Ovary (tissue), 10 donors: ENCODE measurements at regions of chr1 and their contacts with region 1.

Region 1: DNA sequence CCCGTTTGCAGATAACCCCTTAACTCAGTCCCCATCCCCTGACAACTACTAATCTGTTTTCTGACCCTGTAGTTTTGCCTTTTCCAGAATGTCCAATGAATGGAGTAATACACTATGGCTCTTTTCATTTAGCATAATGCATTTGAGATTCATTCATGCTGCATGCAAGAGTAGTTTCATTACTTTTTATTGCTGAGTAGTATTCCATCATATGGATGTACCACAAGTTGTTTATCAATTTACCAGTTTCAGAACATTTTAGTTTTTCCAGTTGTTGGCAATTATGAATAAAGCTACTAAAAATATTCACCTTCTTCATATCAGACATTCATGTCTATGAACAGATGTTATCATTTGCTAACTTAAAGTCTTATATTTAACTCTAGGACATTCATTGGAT is 45.3 kb downstream of the STXBP3 start:
- DNase-seq: no peak
- H3K4me3 ChIP-seq: no peak overlapping the region
- H3K27ac ChIP-seq: no peak overlapping the region
- H3K4me1 ChIP-seq: no peaks in the 10 kb centered on the region
- H3K27me3 ChIP-seq: no peaks in the 10 kb centered on the region
- CTCF ChIP-seq: no peak
- EP300 ChIP-seq: no peak
- POLR2A ChIP-seq: no peak

Region 2: DNA sequence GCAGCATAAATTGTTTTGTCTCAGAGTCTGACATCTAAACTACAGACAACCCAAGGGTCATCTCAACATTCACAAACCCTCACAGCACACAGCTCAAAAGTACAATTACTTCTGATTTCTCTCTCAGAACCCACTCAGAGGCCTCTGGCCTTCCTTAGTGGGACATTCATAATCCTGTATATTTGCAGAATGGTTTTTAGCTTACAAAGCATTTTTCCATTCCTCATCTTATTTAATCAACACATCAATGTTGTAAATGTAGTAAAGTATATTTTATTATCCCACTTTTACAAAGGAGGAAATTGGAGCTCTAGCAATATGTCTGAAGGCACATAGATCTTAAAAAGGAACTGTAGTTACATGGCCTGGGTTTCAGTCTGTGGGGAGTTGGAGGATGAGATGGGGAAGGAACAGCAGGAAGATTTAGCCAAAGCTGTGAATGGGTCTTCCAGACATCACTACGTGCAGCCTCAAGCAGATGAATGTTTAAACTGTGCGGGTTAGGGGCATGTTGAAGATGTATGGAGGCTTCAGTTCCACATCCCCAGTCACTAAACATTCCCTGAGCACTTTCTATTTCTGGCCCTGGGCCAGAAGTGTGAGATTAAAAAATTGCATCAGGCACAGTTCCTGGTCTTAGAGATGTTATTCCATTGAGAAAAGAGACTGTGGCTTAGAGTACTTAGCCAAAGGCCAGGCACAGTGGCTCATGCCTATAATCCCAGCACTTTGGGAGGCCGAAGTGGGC is 51.8 kb after region 1 on chr1:
- intact Hi-C with region 1: loop called in 1 of 4 experiments (anchors 2 kb)
- DNase-seq: no peak
- H3K4me3 ChIP-seq: no peak overlapping the region
- H3K27ac ChIP-seq: no peak overlapping the region
- H3K4me1 ChIP-seq: no peaks in the 10 kb centered on the region
- H3K27me3 ChIP-seq: no peaks in the 10 kb centered on the region
- CTCF ChIP-seq: no peak
- EP300 ChIP-seq: no peak
- POLR2A ChIP-seq: no peak

Region 3: DNA sequence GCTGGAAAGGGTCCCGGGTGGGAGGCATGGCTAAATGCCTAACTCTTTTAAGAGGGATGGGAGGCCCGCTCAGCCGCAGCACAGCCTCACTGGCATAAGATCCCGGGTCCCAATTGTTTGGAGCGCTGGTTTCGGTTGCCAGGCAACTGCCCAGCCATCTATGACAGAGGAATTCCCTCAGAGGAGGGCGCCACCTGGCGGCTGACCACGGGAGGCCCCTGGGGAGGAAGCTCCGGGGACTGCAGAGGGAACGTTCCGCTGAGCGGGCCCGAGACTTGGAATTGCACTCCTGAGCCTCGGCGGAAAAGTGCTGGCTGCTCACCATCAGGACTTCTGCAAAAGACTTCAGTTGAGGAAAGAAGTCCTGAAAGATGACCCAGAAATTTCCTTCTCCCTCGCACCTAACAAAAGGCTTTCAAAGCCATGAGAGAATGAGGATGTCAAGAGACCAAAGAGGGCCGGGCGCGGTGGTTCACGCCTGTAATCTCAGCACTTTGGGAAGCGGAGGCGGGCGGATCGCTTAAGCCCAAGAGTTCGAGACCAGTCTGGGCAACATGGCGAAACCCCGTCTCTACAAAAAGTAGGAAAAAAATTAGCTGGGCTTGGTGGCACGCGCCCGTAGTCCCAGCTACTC is 321.0 kb after region 1 on chr1:
- intact Hi-C with region 1: no loop called
- DNase-seq: peak; percentile 86 to 94 (median 89)
- H3K4me3 ChIP-seq: peak overlapping the region; percentile 2
- H3K27ac ChIP-seq: no peak overlapping the region
- H3K4me1 ChIP-seq: peaks cover 5% of the 10 kb centered on the region
- H3K27me3 ChIP-seq: no peaks in the 10 kb centered on the region
- CTCF ChIP-seq: peak; percentile 68 to 79 (median 70)
- EP300 ChIP-seq: no peak
- POLR2A ChIP-seq: no peak